Dorsolateral prefrontal cortex (tissue), 120 donors: ENCODE measurements at regions of chr13 and their contacts with region 1.

Region 1: DNA sequence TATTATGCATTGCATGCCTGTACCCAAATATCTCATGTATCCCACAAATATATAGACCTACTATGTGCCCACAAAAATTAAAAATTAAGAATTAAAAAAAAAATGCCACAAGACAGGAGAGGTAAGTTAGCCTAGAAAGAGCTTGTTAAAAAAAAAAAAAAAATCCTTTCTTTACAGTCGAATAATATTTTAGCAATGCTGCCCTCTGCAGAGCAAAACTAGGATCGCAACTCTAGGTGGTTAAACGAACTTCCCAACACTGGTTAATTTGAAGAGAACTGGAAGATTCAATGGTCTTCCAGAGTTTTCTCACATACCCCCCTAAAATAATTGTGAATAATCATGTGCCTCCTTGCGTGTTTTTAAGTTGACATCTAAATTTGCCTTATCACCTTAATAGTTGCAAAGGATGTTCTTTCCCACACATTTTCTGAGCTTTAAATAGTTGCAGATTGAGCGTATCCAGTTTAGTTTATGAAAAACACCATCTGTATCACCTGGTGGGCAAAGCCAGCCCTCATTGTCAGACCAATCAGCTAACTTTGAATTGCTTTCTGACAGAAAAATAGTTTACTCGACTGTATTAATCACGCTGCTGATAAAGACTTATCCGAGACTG is 47.4 kb upstream of the RCBTB2 start:
- DNase-seq: peak in 6 of 10 donors; percentile 47 to 84 (median 56)
- H3K4me3 ChIP-seq: no peak overlapping the region
- H3K27ac ChIP-seq: peak overlapping the region in 4 of 59 donors; percentile 21 to 66 (median 44)
- H3K27me3 ChIP-seq: no peaks in the 10 kb centered on the region
- CTCF ChIP-seq: peak; percentile 72 to 93 (median 84)

Region 2: DNA sequence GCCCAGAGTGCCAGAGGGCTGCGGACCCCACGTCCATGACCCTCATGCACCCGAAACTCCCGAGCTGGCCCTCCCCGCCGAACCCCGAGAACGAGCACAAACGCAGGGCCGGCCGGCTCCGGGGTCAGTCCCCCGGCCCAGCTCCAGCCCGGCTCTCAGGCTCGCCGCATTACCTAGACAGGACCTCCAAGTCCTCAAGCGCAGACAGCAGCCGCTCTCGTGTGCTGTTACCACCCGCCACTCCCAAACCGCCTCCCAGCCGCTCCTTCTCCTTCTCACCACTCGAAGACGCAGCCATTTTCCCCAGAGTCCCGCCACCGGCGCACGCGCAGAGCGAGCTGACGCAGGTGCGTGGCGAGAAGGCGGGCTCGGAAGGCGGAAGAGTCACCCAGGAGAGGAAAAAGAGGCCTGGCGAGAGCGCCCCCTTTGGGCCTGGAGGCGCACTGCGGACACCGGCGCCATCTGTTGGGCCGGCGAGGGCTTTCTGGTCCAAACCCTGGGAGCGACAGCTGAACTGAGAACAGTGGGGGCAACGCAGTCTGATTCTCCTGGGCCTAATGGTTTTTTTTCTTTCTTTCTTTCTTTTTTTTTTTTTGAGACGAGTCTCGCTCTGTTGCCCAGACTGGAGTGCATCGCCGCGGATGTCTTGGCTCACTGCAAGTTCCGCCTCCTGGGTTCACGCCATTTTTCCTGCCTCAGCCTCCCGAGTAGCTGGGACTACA is 485.4 kb before region 1 on chr13 and contains the start of gene MED4:
- intact Hi-C with region 1: loop called (anchors 10 kb)
- DNase-seq: peak; percentile 88 to 98 (median 92)
- H3K4me3 ChIP-seq: peak within 1 kb of the TSS; percentile 57 to 100 (median 97)
- H3K27ac ChIP-seq: peak within 1 kb of the TSS in 57 of 59 donors; percentile 5 to 96 (median 80)
- H3K27me3 ChIP-seq: no peaks in the 10 kb centered on the region
- CTCF ChIP-seq: peak in 55 of 56 donors; percentile 99 to 100 (median 100)
- total RNA-seq, gene MED4: 25.6 to 57.8 (median 42.3) TPM

Region 3: GRCh38 chr13:48233046-48233907 is 347.0 kb before region 1 on chr13 and contains the start of gene ITM2B:
- intact Hi-C with region 1: loop called (anchors 10 kb)
- DNase-seq: peak; percentile 56 to 86 (median 76)
- H3K4me3 ChIP-seq: peak within 1 kb of the TSS; percentile 61 to 100 (median 94)
- H3K27ac ChIP-seq: peak within 1 kb of the TSS; percentile 90 to 100 (median 99)
- H3K27me3 ChIP-seq: no peaks in the 10 kb centered on the region
- CTCF ChIP-seq: peak in 45 of 56 donors; percentile 10 to 69 (median 44)
- total RNA-seq, gene ITM2B: 414 to 659 (median 555) TPM

Region 4: DNA sequence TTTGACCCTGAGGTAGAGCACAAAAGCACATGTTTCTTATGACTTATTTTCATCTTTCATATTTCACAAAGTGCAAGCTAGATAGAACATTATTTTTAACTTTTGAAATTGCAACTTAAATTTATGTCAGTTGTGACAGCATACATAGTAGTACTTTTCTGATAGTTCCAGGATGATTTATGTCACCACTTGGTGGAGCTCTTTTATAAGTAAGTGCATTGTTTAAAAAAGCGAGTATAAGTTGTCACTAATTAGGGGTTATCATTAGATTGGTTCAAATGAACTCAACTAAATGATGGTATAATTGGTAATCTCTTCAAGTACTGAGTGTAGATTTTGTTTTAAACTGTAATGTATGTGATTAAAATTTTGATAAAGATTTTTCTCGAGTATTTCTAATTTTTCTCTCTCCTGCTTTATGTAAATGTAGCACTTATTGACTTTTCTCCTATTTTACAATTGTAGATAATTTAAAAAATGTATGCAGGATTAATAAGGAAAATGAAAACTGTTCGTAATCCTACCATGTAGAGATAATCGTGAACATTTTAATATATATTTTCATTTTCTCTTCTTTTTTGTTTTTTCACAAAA is 245.7 kb before region 1 on chr13:
- intact Hi-C with region 1: loop called (anchors 2 to 5 kb)
- DNase-seq: no peak
- H3K4me3 ChIP-seq: no peak overlapping the region
- H3K27ac ChIP-seq: no peak overlapping the region
- H3K27me3 ChIP-seq: no peaks in the 10 kb centered on the region
- CTCF ChIP-seq: peak; percentile 40 to 90 (median 76)

Region 5: GRCh38 chr13:48477191-48477855 is 103.0 kb before region 1 on chr13:
- intact Hi-C with region 1: no loop called
- DNase-seq: no peak
- H3K4me3 ChIP-seq: peak overlapping the region in 23 of 59 donors; percentile 1 to 52 (median 24)
- H3K27ac ChIP-seq: peak overlapping the region in 37 of 59 donors; percentile 1 to 78 (median 35)
- H3K27me3 ChIP-seq: no peaks in the 10 kb centered on the region
- CTCF ChIP-seq: no peak

Region 6: GRCh38 chr13:48532506-48533499 is 47.5 kb before region 1 on chr13 and contains the start of gene RCBTB2:
- intact Hi-C with region 1: loop called in 1 of 2 experiments (anchors 5 kb)
- DNase-seq: peak; percentile 93 to 98 (median 96)
- H3K4me3 ChIP-seq: peak within 1 kb of the TSS; percentile 57 to 96 (median 85)
- H3K27ac ChIP-seq: peak within 1 kb of the TSS; percentile 90 to 100 (median 98)
- H3K27me3 ChIP-seq: no peaks in the 10 kb centered on the region
- CTCF ChIP-seq: peak in 29 of 56 donors; percentile 3 to 51 (median 23)
- total RNA-seq, gene RCBTB2: 7.7 to 20.0 (median 11.9) TPM